CD8-positive, alpha-beta T cell (primary cell): ENCODE measurements at regions of chr18 and their contacts with region 1.

Region 1: GRCh38 chr18:62982600-62983251 is 267.4 kb downstream of the PHLPP1 start:
- DNase-seq: peak; percentile 25 to 77 (median 57)
- ATAC-seq: peak; percentile 65
- H3K4me3 ChIP-seq: no peak overlapping the region
- H3K4me3 Mint-ChIP-seq: peak overlapping the region; percentile 62
- H3K27ac ChIP-seq: no peak overlapping the region
- H3K27ac Mint-ChIP-seq: no peak overlapping the region
- H3K4me1 ChIP-seq: no peaks in the 10 kb centered on the region
- H3K4me1 Mint-ChIP-seq: peaks cover 6% of the 10 kb centered on the region
- H3K27me3 ChIP-seq: no peaks in the 10 kb centered on the region
- H3K27me3 Mint-ChIP-seq: no peaks in the 10 kb centered on the region
- CTCF ChIP-seq: peak; percentile 70

Region 2: DNA sequence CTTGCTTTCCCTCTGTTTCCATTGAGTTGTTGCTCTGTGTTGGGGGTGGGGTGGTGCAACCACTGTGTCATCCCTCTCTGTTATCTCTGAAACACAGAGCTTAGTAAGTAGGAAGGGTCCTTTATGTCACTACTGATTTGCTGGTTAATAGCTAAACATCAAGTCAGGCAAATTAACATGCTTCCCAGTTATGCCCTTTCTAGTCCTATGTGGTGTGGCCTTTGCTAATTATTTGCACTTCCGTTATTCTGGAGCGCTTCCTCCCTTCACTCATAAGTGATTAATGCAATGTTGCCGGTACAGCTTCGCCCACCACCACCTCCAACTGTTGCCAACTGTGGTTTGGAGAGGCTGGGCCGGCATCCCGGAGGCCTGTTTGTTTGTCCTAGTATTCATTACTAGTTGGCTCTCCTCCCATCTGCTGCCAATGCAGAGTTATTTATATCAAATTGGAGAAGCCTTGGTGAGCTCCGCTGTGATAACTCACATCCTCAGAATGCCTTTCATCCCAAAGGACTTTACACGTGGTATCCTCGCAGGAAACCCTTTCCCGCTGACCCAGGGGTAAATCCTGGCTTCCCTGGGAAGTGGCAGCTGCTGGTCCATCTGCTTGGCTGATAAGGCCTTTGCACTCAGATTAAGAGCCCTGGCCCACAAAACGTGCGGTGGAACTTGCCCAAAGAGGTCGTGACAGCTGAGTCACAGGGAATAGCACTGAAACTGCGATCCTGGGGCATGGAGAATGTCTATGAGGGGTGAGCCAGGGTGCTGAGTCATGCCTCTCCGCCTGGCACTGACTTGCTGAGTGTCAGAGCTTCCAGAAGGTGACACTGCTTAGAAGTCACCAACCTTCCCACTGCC is 532.0 kb before region 1 on chr18:
- CTCF ChIA-PET with region 1: no interaction called
- POLR2A ChIA-PET with region 1: no interaction called
- intact Hi-C with region 1: no loop called
- DNase-seq: peak in 2 of 9 experiments; percentile 19 to 36
- ATAC-seq: no peak
- H3K4me3 ChIP-seq: no peak overlapping the region
- H3K4me3 Mint-ChIP-seq: no peak overlapping the region
- H3K27ac ChIP-seq: no peak overlapping the region
- H3K27ac Mint-ChIP-seq: no peak overlapping the region
- H3K4me1 ChIP-seq: no peaks in the 10 kb centered on the region
- H3K4me1 Mint-ChIP-seq: no peaks in the 10 kb centered on the region
- H3K27me3 ChIP-seq: no peaks in the 10 kb centered on the region
- H3K27me3 Mint-ChIP-seq: peaks cover 22% of the 10 kb centered on the region
- CTCF ChIP-seq: no peak

Region 3: GRCh38 chr18:62637807-62638687 is 344.7 kb before region 1 on chr18:
- CTCF ChIA-PET with region 1: interaction called, 39 read pairs
- POLR2A ChIA-PET with region 1: no interaction called
- intact Hi-C with region 1: loop called (anchors 1 kb)
- DNase-seq: peak; percentile 8 to 64 (median 50)
- ATAC-seq: peak; percentile 68
- H3K4me3 ChIP-seq: no peak overlapping the region
- H3K4me3 Mint-ChIP-seq: no peak overlapping the region
- H3K27ac ChIP-seq: no peak overlapping the region
- H3K27ac Mint-ChIP-seq: no peak overlapping the region
- H3K4me1 ChIP-seq: no peaks in the 10 kb centered on the region
- H3K4me1 Mint-ChIP-seq: no peaks in the 10 kb centered on the region
- H3K27me3 ChIP-seq: peaks cover 0 to 2% of the 10 kb centered on the region in 2 experiments
- H3K27me3 Mint-ChIP-seq: peaks cover 22% of the 10 kb centered on the region
- CTCF ChIP-seq: peak; percentile 44

Region 4: DNA sequence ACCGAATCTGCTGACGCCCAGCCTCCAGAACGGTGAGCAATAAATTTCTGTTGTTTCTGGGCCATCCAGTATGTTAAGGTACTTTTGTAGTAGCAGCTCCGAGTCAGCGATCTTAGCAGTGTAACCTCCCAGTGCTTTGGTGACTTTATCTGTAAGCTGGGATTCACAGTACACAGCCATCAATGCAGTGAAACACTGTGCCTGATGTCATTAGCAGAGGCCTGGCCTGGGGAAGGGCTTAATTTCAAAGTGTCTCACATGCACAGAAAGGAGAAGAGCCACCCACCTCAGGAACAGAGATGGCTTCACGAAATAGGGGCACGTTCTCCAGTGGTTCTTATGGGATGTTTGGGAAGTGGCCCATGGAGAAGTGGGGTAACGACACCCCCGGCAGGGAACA is 13.8 kb after region 1 on chr18:
- CTCF ChIA-PET with region 1: interaction called, 18 read pairs
- POLR2A ChIA-PET with region 1: no interaction called
- intact Hi-C with region 1: no loop called
- DNase-seq: no peak
- ATAC-seq: no peak
- H3K4me3 ChIP-seq: no peak overlapping the region
- H3K4me3 Mint-ChIP-seq: no peak overlapping the region
- H3K27ac ChIP-seq: no peak overlapping the region
- H3K27ac Mint-ChIP-seq: no peak overlapping the region
- H3K4me1 ChIP-seq: no peaks in the 10 kb centered on the region
- H3K4me1 Mint-ChIP-seq: no peaks in the 10 kb centered on the region
- H3K27me3 ChIP-seq: no peaks in the 10 kb centered on the region
- H3K27me3 Mint-ChIP-seq: peaks cover 5% of the 10 kb centered on the region
- CTCF ChIP-seq: no peak